Tibial artery (tissue), 4 donors: ENCODE measurements at regions of chr1 and their contacts with region 1.

Region 1: DNA sequence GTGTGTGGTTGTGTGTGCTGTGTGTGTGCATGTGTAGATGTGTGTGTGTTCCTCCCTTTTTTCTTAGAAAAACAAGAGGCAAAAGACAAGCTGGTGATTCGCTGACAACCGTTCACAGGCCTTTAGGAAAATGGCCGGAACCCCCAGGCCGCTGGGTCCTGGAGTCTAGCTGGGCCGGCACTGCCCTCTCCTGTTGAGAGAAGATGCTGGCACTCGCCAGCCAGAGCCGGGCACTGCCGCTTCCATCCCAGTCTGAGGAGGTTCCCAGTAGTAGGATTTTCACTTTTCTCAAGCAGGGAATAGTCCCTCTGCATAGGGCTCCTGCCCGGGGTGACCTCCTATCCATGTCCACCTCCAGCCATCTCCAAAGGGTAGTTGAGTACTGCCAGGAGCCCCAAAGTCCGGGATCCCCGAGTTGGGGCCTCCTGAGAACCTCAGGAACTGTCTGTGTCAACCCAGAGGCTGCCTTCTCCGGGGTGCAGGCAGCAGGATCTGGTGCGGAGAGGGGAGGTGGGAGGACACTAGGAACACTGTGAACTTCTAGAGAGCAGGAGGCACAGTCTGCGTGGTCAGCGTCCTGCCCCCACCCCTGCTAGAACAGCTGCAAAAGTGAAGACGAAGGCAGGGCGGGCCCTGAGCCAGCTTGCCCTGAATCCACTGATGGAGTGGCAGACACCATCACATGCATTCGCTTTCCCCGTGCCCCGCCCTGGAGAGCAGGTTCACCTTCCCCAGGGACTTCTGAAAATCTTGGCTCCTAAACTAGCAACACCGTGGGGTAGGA is 44.1 kb upstream of the ARHGEF16 start:
- DNase-seq: peak; percentile 71 to 89
- H3K4me3 ChIP-seq: no peak overlapping the region
- H3K27ac ChIP-seq: peak overlapping the region; percentile 40 to 62
- H3K4me1 ChIP-seq: peaks cover 0 to 13% (median 0%) of the 10 kb centered on the region in 4 donors
- H3K27me3 ChIP-seq: no peaks in the 10 kb centered on the region
- CTCF ChIP-seq: peak; percentile 88 to 89

Region 2: DNA sequence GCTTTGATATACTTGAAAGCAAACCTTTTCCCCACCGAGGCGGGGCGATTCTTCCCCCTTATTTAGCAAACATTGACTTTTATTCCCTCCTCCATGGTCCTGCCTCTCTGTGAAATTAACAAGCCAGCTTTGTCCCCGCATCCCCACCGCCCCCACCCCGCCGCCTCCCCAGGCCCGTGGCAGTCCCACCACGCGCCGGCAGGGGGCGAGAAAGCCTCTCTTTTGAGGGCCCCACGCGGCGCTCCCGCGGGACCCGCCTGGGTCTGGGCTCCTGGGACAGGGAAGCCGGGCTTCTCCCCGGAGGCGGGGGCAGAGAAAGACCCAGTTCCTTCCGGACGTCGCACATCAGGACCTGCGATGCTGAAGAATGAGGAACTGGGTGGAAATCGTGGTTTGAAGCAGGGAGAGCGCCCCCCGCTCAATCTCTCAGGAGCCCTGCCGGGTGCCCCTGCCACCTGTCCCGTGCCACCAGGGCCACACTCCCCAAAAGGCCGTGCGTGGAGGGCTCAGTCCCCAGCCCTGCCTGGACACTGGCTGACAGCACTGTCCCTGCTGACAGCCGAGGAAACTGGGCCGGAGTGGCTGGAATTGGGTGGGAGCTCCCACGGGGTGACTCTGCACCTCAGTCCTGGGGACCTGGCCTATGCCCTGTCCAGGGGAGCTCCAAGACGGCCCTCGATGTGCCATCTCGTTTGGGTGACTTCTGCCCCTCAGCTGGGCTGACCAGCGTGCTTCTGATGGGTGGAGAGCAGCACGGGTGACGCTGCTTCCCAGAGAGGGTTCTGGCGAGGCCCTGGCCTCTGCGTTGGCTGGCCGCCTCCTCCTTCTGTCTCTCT is 397.7 kb before region 1 on chr1:
- intact Hi-C with region 1: loop called (anchors 5 kb)
- DNase-seq: peak; percentile 47 to 79
- H3K4me3 ChIP-seq: peak overlapping the region; percentile 3 to 38
- H3K27ac ChIP-seq: peak overlapping the region; percentile 29 to 45
- H3K4me1 ChIP-seq: peaks cover 0 to 15% (median 12%) of the 10 kb centered on the region in 4 donors
- H3K27me3 ChIP-seq: peaks cover 0 to 14% of the 10 kb centered on the region in 2 donors
- CTCF ChIP-seq: peak in 1 of 2 experiments; percentile 97

Region 3: GRCh38 chr1:3352299-3352951 is 57.9 kb before region 1 on chr1:
- intact Hi-C with region 1: loop called (anchors 2 kb)
- DNase-seq: peak; percentile 82 to 93
- H3K4me3 ChIP-seq: peak overlapping the region; percentile 31 to 41
- H3K27ac ChIP-seq: peak overlapping the region; percentile 94
- H3K4me1 ChIP-seq: peaks cover 11 to 99% (median 93%) of the 10 kb centered on the region in 4 donors
- H3K27me3 ChIP-seq: no peaks in the 10 kb centered on the region
- CTCF ChIP-seq: no peak